GM12878 (cell line): ENCODE measurements at regions of chr11 and their contacts with region 1.

Region 1: DNA sequence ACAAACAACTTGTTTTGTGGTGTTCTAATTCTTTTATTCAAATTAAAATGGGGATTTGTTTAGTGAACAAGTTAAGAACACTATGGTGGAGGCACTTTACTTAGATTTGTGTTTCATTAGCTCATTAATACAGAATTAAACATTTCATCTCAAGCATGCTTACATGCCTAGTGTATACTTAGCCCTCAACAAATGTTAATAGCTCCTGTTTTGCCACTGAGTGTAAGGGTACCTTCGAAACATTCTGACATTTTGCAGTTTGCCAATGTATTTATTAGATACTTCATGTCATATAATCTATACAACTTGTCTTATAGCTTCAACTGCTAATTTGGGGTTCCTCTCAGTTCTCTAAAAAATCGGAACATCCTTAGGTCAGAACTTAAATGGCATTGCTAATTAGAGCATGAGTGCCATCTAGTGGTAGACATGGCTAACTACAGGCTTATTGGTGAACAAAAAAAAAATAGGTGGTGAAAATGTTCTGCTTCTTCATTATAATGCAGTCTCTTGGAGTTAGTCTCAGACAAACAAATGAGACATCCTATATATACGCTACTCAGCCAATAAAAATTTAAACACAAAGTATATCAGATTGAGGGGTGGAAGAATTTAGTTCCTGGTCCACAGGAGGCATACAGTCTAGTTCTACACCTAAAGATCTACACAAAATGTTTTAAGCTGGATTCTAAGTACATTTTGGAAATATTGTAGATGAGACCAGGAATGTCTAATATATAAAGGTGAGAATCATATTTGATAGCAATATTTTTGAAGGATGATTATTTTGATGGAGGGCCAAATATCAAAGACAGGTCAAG is 4.9 kb upstream of the CNTN5 start:
- DNase-seq: peak; percentile 19
- ATAC-seq: peak; percentile 61
- H3K4me3 ChIP-seq: no peak overlapping the region
- H3K27ac ChIP-seq: no peak overlapping the region
- H3K4me1 ChIP-seq: no peaks in the 10 kb centered on the region
- H3K27me3 ChIP-seq: no peaks in the 10 kb centered on the region; a peak in 1 of 4 replicates
- CTCF ChIP-seq: peak; percentile 73 to 82 (median 73)
- EP300 ChIP-seq: no peak
- POLR2A ChIP-seq: no peak
- RAD21 ChIP-seq: peak; percentile 89

Region 2: DNA sequence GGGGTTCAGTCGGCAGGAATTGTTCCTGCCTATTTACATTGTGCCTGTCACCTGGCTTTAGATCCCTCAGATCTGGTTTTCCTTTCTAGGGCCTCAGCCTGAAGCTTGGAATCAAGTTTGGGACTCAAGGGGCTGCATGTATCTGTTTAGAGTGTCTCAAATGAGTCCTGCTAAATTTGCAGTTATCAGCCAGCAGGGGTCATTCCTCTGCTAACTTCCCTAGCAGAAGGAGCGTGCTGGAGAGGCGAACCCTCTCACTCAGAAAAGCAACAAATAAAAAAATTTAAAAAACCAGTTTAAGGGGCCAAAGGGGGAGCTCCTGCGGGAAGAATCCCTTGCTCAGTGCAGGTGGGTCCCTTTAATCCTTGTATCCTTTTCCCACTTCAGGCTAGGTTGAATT is 1405.8 kb before region 1 on chr11:
- CTCF ChIA-PET with region 1: interaction called, 3 read pairs
- POLR2A ChIA-PET with region 1: no interaction called
- RAD21 ChIA-PET with region 1: no interaction called
- SMC1A ChIA-PET with region 1: no interaction called
- in situ Hi-C with region 1: loop called (anchors 25 kb)
- intact Hi-C with region 1: no loop called
- DNase-seq: no peak
- ATAC-seq: peak; percentile 65
- H3K4me3 ChIP-seq: no peak overlapping the region
- H3K27ac ChIP-seq: no peak overlapping the region
- H3K4me1 ChIP-seq: no peaks in the 10 kb centered on the region
- H3K27me3 ChIP-seq: no peaks in the 10 kb centered on the region; a peak in 1 of 4 replicates
- CTCF ChIP-seq: peak in 2 of 3 experiments; percentile 26 to 29; a peak in 3 of 6 replicates
- EP300 ChIP-seq: no peak
- POLR2A ChIP-seq: no peak
- RAD21 ChIP-seq: peak; percentile 15; the same call in 1 of the 2 replicates

Region 3: DNA sequence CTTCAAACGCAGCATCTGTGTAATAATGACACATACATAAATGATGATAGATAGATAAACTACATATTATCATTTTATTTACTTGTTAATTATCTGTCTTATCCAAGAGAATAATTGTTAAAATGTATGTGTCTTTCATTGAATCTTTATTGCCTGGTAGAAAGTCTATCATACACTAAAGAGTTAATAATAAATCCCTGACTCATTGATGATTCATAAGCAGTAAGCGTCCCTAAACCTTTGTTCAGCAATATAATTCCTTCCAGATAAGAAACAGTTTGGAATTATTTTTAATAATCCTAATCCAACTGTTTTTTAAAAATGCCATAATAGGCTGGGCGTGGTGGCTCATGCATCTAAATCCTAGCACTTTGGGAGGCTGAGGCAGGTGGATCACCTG is 650.7 kb before region 1 on chr11:
- CTCF ChIA-PET with region 1: no interaction called
- POLR2A ChIA-PET with region 1: no interaction called
- RAD21 ChIA-PET with region 1: no interaction called
- SMC1A ChIA-PET with region 1: no interaction called
- in situ Hi-C with region 1: no loop called
- intact Hi-C with region 1: loop called (anchors 10 kb)
- DNase-seq: no peak
- ATAC-seq: no peak
- H3K4me3 ChIP-seq: no peak overlapping the region
- H3K27ac ChIP-seq: no peak overlapping the region
- H3K4me1 ChIP-seq: no peaks in the 10 kb centered on the region
- H3K27me3 ChIP-seq: no peaks in the 10 kb centered on the region
- CTCF ChIP-seq: no peak
- EP300 ChIP-seq: no peak
- POLR2A ChIP-seq: no peak
- RAD21 ChIP-seq: no peak

Region 4: GRCh38 chr11:98455500-98456307 is 560.1 kb before region 1 on chr11:
- CTCF ChIA-PET with region 1: no interaction called
- POLR2A ChIA-PET with region 1: no interaction called
- RAD21 ChIA-PET with region 1: no interaction called
- SMC1A ChIA-PET with region 1: no interaction called
- in situ Hi-C with region 1: no loop called
- intact Hi-C with region 1: loop called (anchors 5 kb)
- DNase-seq: no peak
- ATAC-seq: no peak
- H3K4me3 ChIP-seq: no peak overlapping the region
- H3K27ac ChIP-seq: no peak overlapping the region
- H3K4me1 ChIP-seq: no peaks in the 10 kb centered on the region
- H3K27me3 ChIP-seq: no peaks in the 10 kb centered on the region
- CTCF ChIP-seq: no peak; a peak in 1 of 6 replicates
- EP300 ChIP-seq: no peak
- POLR2A ChIP-seq: no peak
- RAD21 ChIP-seq: no peak

Region 5: GRCh38 chr11:99098751-99099150 is 82.9 kb after region 1 on chr11:
- CTCF ChIA-PET with region 1: no interaction called
- POLR2A ChIA-PET with region 1: no interaction called
- RAD21 ChIA-PET with region 1: no interaction called
- SMC1A ChIA-PET with region 1: no interaction called
- in situ Hi-C with region 1: no loop called
- intact Hi-C with region 1: no loop called
- DNase-seq: peak; percentile 20
- ATAC-seq: peak; percentile 77
- H3K4me3 ChIP-seq: no peak overlapping the region
- H3K27ac ChIP-seq: no peak overlapping the region
- H3K4me1 ChIP-seq: no peaks in the 10 kb centered on the region
- H3K27me3 ChIP-seq: no peaks in the 10 kb centered on the region
- CTCF ChIP-seq: no peak
- EP300 ChIP-seq: no peak; a peak in 1 of 4 replicates
- POLR2A ChIP-seq: no peak
- RAD21 ChIP-seq: no peak

Region 6: GRCh38 chr11:99739464-99740089 is 723.7 kb after region 1 on chr11:
- CTCF ChIA-PET with region 1: interaction called, 20 read pairs
- POLR2A ChIA-PET with region 1: no interaction called
- RAD21 ChIA-PET with region 1: interaction called, 4 read pairs
- SMC1A ChIA-PET with region 1: no interaction called
- in situ Hi-C with region 1: no loop called
- intact Hi-C with region 1: loop called (anchors 10 kb)
- DNase-seq: no peak
- ATAC-seq: peak; percentile 47; the same call in 1 of the 3 replicates
- H3K4me3 ChIP-seq: no peak overlapping the region
- H3K27ac ChIP-seq: no peak overlapping the region
- H3K4me1 ChIP-seq: no peaks in the 10 kb centered on the region
- H3K27me3 ChIP-seq: no peaks in the 10 kb centered on the region
- CTCF ChIP-seq: peak; percentile 29 to 51 (median 50); a peak in 5 of 6 replicates
- EP300 ChIP-seq: no peak
- POLR2A ChIP-seq: no peak
- RAD21 ChIP-seq: peak; percentile 72